Naive thymus-derived CD8-positive, alpha-beta T cell (primary cell): ENCODE measurements at regions of chr1 and their contacts with region 1.

Region 1: GRCh38 chr1:154386643-154387352 is 18.3 kb upstream of the IL6R start:
- DNase-seq: peak; percentile 41 to 84 (median 65)
- ATAC-seq: peak; percentile 92 to 93
- H3K4me3 Mint-ChIP-seq: peak overlapping the region; percentile 67 to 87 (median 84)
- H3K27ac Mint-ChIP-seq: peak overlapping the region; percentile 93 to 100 (median 97)
- H3K4me1 Mint-ChIP-seq: peaks cover 14 to 56% (median 36%) of the 10 kb centered on the region in 4 donors
- H3K27me3 Mint-ChIP-seq: no peaks in the 10 kb centered on the region

Region 2: GRCh38 chr1:154344977-154345837 is 41.6 kb before region 1 on chr1:
- POLR2A ChIA-PET with region 1: interaction called, 21 read pairs
- DNase-seq: peak; percentile 59 to 90 (median 78)
- ATAC-seq: peak; percentile 34 to 42
- H3K4me3 Mint-ChIP-seq: peak overlapping the region; percentile 85 to 98 (median 92)
- H3K27ac Mint-ChIP-seq: peak overlapping the region; percentile 86 to 97 (median 92)
- H3K4me1 Mint-ChIP-seq: peaks cover 47 to 95% (median 89%) of the 10 kb centered on the region in 4 donors
- H3K27me3 Mint-ChIP-seq: no peaks in the 10 kb centered on the region

Region 3: DNA sequence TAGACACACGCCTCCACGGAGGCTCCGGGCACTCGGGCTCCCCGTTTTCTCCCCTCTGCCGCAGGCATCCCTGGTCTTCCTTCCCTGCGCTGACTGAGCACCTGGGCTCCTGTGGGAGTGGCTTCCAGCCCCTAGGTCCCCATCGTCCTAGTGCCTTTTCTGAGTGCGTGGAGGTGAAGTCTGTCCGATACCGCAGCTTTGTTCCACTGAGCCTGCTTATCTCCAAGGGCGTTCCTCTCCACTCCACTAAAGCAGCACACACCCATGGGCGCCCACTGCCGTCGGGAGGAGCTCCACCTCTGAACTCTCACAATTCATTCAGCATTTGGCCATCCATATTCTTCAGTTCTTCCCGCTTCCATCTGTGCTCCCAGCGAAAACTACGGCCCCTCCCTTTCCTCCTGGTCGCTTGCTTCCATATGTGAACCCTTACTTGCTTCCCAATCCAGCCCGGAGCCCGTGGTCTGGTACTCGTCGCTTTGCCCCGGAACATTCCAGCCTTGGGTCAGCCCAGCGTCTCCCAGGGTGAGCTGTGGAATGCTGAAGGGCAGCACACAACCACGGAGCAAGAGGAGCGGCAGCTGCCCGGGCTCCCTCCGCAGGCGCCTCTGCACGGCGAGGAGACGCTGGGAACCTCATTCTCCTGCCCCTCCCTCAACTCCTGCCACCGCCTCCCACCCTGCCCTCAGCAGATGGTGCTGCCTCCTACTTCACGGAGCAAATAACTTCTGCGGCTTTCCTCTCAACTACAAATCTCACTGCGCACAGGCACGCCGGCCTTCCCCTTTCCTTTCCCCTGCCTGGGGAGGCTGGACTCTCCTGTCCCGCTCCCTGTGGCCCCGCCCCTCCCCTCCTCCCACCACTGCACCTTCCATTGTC is 34.0 kb before region 1 on chr1:
- POLR2A ChIA-PET with region 1: interaction called, 14 read pairs
- DNase-seq: peak in 8 of 10 donors; percentile 25 to 72 (median 40)
- ATAC-seq: peak; percentile 81 to 83
- H3K4me3 Mint-ChIP-seq: peak overlapping the region; percentile 78 to 99 (median 91)
- H3K27ac Mint-ChIP-seq: peak overlapping the region; percentile 86 to 96 (median 90)
- H3K4me1 Mint-ChIP-seq: peaks cover 28 to 63% (median 48%) of the 10 kb centered on the region in 4 donors
- H3K27me3 Mint-ChIP-seq: peaks cover 0 to 8% (median 0%) of the 10 kb centered on the region in 5 donors

Region 4: DNA sequence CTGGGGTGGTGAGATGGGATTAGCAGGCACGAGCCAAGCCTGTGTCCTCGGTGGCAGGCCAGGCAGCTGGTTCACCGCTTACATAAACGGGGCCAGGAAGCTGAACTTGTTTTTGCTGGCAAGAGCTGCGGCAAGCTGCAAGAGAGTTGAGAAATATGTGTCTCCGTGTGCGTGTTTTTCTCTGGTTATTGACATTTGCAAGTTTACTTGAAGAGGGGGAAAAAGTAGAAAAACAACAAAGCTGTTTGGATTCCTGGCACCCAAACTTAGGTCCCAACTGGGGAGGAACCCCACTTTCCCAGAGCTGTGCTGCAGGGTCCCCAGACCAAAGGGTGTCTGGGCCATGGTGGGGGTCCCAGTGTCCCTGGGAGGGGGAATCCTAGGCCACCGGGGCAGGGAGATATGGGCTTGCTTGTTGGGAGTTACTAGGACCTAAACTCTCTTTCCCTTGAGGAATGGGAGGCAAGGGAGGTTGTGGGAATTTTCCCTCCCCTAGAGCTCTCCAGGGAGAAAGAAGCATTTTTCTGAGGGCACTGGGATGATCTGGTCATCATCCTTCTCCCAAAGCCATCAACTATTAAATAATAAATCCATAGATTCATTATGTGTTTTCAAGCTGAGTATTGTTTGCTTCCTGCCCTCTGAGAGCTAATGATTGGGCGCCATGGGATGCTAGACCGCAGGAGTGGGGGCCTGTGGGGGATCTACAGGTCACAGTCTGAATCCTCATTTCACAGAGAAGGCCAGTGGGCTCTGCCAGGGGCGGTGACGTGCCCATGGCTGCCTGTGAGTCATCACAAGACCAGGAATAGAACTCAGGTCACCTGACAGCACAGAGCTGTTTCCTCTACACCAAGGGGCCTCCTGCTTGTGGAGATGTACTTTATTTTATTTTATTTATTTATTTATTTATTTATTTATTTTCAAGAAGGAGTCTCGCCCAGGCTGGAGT is 33.1 kb after region 1 on chr1:
- POLR2A ChIA-PET with region 1: interaction called, 13 read pairs
- DNase-seq: peak in 6 of 10 donors; percentile 31 to 56 (median 33)
- ATAC-seq: peak; percentile 78 to 82
- H3K4me3 Mint-ChIP-seq: peak overlapping the region; percentile 54 to 88 (median 77)
- H3K27ac Mint-ChIP-seq: peak overlapping the region; percentile 85 to 99 (median 94)
- H3K4me1 Mint-ChIP-seq: peaks cover 43 to 90% (median 81%) of the 10 kb centered on the region in 4 donors
- H3K27me3 Mint-ChIP-seq: no peaks in the 10 kb centered on the region

Region 5: DNA sequence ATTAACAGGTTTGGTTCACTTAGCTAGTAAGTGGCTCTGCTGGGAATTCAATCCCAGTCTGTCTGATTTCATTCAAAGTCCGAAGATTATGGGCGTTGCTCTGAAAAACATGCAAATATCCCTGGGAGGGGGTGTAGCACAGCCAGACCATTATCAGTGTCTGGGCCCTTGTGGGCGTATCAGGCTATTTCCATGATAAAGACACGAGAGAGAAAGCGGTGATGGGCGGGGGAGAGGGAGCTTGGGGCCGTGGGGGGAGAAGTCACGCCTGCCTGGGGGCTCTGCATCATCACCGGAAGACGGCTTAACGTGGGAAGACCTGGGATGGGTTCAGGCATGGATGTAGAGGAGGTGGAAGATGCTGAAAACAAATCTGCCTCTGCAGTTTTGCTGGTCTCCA is 44.1 kb after region 1 on chr1:
- POLR2A ChIA-PET with region 1: no interaction called
- DNase-seq: no peak
- ATAC-seq: no peak
- H3K4me3 Mint-ChIP-seq: no peak overlapping the region
- H3K27ac Mint-ChIP-seq: peak overlapping the region in 6 of 10 donors; percentile 17 to 86 (median 60)
- H3K4me1 Mint-ChIP-seq: peaks cover 18 to 57% (median 43%) of the 10 kb centered on the region in 4 donors
- H3K27me3 Mint-ChIP-seq: no peaks in the 10 kb centered on the region